Vagina (tissue), 2 donors: ENCODE measurements at regions of chr15 and their contacts with region 1.

Region 1: DNA sequence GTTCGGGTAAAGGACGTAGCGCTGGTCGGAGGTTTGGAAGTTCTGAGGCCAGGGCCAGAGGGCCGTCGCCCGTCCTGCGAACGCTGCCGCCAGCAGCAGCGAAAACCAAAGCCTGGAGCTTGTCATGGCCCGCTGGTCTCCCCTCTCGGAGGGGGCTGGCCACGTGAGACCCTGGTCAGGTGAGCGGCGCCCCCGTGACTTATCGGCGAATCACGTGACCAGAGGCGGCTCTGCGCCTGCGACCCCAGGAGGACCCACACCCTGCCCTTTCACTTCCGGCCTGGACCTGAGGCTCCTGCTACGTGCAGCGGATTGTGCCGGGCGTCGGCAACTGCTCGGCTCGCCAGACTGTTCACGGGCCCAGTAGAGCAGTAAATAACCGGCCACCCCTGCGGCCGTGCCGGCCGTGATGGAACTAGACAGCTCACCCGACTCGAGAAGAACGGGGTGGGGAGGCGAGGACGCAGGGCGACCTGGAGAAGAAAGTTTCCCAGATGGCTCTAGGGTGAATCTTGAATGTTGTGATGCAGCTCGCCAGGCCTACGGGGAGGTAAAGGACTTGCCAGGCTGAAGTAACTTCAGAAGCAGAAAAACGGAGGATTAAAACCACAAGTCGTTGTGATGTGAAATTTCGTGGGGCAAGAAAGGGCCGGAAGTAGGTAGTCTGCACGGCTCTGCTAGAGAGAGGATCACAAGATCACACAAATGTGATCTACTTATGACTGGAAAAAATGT is at the start of gene HEXA:
- DNase-seq: peak in 1 of 2 donors; percentile 93
- H3K4me3 ChIP-seq: peak within 1 kb of the TSS; percentile 84 to 98
- H3K27ac ChIP-seq: peak within 1 kb of the TSS; percentile 94
- H3K4me1 ChIP-seq: peaks cover 44% of the 10 kb centered on the region
- H3K27me3 ChIP-seq: no peaks in the 10 kb centered on the region
- CTCF ChIP-seq: no peak
- POLR2A ChIP-seq: peak in 1 of 2 donors; percentile 32
- total RNA-seq, gene HEXA: 82.5 TPM

Region 2: DNA sequence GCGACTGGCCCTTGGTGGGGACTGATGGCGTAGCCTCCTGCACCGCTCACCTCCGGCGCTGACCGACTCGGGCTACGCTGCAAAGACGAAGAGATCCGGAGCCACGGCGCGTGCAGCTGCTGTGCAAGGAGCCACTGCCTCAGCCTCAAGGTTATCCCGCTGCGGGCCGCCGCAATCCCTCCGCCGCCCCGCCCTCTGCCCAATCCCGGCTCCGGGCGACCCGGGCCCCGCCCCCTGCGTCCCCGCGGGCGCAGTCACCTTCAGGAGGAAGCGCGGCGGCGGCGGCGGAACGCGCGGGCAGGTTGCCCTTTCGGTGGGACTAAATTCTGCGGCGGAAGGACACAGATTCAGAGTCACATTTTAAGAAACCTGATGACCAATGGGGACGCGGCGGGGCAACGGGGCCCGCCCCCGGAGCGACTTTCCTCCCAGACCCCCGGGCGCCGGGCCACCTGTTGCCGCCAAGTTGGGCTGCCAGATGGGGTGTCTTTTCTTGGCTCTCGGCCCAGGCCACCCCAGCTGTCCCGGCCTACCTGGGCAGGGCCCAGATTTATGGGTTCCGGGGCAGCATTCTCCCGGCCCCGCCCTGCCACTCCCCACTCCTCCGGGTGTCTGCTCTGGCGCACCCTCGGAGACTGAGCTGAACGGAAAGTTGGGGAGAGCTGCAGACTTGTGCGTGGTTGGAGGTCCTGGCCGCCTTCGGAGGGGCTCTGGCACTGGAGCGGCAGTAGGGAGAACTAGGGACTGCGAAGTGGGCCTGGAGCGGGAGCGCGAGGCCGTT is 144.8 kb before region 1 on chr15 and contains the start of gene PKM:
- intact Hi-C with region 1: loop called (anchors 5 kb)
- DNase-seq: peak in 1 of 2 donors; percentile 96
- H3K4me3 ChIP-seq: peak within 1 kb of the TSS; percentile 89 to 97
- H3K27ac ChIP-seq: peak within 1 kb of the TSS; percentile 98
- H3K4me1 ChIP-seq: peaks cover 47% of the 10 kb centered on the region
- H3K27me3 ChIP-seq: no peaks in the 10 kb centered on the region
- CTCF ChIP-seq: peak in 1 of 3 experiments; percentile 20
- POLR2A ChIP-seq: peak in 1 of 2 donors; percentile 95
- total RNA-seq, gene PKM: 484 TPM